ENCODE measurements at regions of chr1 and their contacts with region 1.

Region 1: GRCh38 chr1:51341876-51342496 is 11.6 kb upstream of the TTC39A start:
- DNase-seq: peak; percentile 48 to 68 (median 58)
- ATAC-seq: peak; percentile 82
- H3K4me3 ChIP-seq: no peak overlapping the region
- H3K27ac ChIP-seq: no peak overlapping the region
- H3K4me1 ChIP-seq: peaks cover 0 to 17% of the 10 kb centered on the region in 2 experiments; a peak in 2 of 5 replicates
- H3K27me3 ChIP-seq: peaks cover 0 to 8% of the 10 kb centered on the region in 2 experiments; a peak in 3 of 5 replicates
- CTCF ChIP-seq: peak; percentile 72 to 76 (median 74)
- EP300 ChIP-seq: no peak
- POLR2A ChIP-seq: no peak
- RAD21 ChIP-seq: peak; percentile 46 to 80

Region 2: GRCh38 chr1:51253691-51254090 is 88.3 kb before region 1 on chr1:
- CTCF ChIA-PET with region 1: no interaction called
- POLR2A ChIA-PET with region 1: no interaction called
- in situ Hi-C with region 1: no loop called
- intact Hi-C with region 1: no loop called
- DNase-seq: no peak
- ATAC-seq: no peak
- H3K4me3 ChIP-seq: no peak overlapping the region
- H3K27ac ChIP-seq: no peak overlapping the region
- H3K4me1 ChIP-seq: peaks cover 0 to 6% of the 10 kb centered on the region in 2 experiments; a peak in 2 of 5 replicates
- H3K27me3 ChIP-seq: no peaks in the 10 kb centered on the region
- CTCF ChIP-seq: no peak
- EP300 ChIP-seq: no peak
- POLR2A ChIP-seq: no peak
- RAD21 ChIP-seq: no peak

Region 3: DNA sequence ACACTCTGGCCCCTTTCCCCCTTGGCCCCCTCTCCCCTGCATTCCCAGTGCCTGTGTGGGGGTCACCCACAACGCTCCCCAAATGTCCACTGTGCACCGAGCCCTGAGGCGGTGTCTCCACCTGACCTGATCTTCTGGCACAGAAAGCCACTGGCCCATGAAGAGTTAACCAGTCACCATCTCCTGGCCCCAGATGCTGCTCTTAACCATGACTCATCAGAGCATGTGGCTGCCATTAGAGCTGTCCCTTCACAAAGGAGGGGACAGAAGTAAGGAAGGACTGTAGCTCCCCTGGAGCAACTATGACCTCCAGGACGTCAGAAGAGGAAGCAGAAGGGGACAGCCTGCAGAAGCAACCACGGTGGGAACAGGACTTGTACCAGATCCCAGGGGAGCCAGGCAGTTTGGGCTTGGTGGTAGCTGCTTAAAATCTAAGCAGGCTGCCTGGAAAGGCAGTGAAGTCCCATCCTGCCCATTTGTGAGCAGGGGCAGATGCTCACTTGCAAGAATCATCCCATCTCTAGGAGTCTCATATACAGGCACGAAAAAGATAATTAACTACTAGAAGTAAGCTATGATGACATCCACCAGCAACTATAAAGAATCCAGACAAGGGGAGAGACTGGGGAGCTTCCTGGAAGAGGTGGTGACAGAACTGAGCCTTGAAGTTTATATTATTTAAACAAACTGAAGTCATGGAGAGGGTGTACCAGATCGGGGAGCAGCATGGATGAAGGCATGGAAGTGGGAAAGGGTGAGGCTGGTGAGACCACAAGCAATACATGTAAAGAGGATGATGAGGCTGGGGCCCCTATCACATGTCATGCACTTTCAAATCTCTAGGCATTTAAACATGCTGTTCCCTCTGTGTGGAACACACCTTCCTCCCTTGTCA is 10.5 kb before region 1 on chr1:
- CTCF ChIA-PET with region 1: no interaction called
- POLR2A ChIA-PET with region 1: interaction called, 17 read pairs
- in situ Hi-C with region 1: no loop called
- intact Hi-C with region 1: no loop called
- DNase-seq: peak; percentile 92 to 93 (median 92)
- ATAC-seq: peak; percentile 94
- H3K4me3 ChIP-seq: no peak overlapping the region
- H3K27ac ChIP-seq: peak overlapping the region; percentile 90
- H3K4me1 ChIP-seq: peaks cover 28 to 33% of the 10 kb centered on the region in 2 experiments
- H3K27me3 ChIP-seq: no peaks in the 10 kb centered on the region
- CTCF ChIP-seq: peak in 1 of 3 experiments; percentile 0; a peak in 1 of 6 replicates
- EP300 ChIP-seq: peak; percentile 63; the same call in 1 of the 2 replicates
- POLR2A ChIP-seq: peak; percentile 86
- RAD21 ChIP-seq: 0 out of 4 replicates have a peak, but pooled peaks of 1 of the 2 experiments have one; percentile 22

Region 4: DNA sequence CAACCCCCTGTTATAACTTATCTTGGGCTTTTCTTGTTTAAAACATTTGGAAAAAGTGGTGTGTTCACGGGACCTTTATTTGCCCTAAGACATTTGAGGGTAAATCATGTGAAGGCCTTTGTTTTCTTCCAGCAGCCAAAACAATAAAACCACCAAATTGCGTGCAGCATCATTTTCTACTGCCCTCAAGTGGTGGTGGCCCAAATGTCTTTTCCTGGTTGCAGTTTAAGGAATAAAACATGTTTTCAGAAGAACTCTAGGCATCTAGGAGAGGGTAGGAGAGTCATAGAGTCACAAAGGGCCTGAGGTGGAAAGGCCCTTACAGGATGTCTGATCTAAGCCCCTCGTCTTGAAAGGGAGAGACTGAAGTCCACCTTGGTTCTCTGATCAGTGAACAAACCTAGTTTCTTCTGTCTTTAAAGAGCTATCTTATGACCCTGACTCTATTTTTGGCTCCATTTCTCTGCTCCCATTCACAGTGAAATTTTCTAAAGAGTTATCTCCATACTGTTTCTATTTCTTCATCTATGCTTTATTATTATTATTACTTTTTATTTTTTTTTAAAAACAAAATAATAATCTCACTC is 193.1 kb after region 1 on chr1:
- CTCF ChIA-PET with region 1: interaction called, 3 read pairs
- POLR2A ChIA-PET with region 1: no interaction called
- in situ Hi-C with region 1: loop called (anchors 10 kb)
- intact Hi-C with region 1: loop called (anchors 2 kb)
- DNase-seq: peak in 3 of 4 experiments; percentile 31 to 74 (median 61)
- ATAC-seq: peak; percentile 84
- H3K4me3 ChIP-seq: no peak overlapping the region
- H3K27ac ChIP-seq: no peak overlapping the region
- H3K4me1 ChIP-seq: peaks cover 0 to 16% of the 10 kb centered on the region in 2 experiments; a peak in 2 of 5 replicates
- H3K27me3 ChIP-seq: no peaks in the 10 kb centered on the region
- CTCF ChIP-seq: peak; percentile 75 to 93 (median 85)
- EP300 ChIP-seq: no peak
- POLR2A ChIP-seq: no peak
- RAD21 ChIP-seq: peak; percentile 83 to 92